GM12878 (cell line): ENCODE measurements at regions of chr2 and their contacts with region 1.

Region 1: DNA sequence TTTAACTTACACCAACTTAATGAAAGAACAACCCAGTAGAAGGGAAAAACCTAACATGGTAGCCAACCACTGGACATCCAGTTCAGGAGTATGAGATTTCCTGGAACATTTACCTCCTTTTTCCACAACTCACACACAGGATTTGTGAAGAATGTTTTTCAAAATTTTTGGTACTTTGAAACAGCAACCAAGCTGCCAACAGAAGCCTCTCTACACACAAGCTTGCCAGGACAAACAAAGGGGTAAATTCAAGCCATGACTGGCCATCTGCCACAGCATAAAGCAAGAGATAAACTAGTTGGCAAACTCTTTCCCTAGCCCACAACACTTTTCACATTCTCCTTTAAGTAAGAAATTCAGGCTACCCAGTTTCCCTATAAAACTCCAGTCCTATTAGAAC is 21.4 kb downstream of the MGAT4A start:
- DNase-seq: no peak
- ATAC-seq: no peak
- H3K4me3 ChIP-seq: no peak overlapping the region
- H3K27ac ChIP-seq: no peak overlapping the region
- H3K4me1 ChIP-seq: peaks cover 18% of the 10 kb centered on the region
- H3K27me3 ChIP-seq: no peaks in the 10 kb centered on the region
- CTCF ChIP-seq: no peak
- EP300 ChIP-seq: no peak
- POLR2A ChIP-seq: no peak
- RAD21 ChIP-seq: no peak

Region 2: DNA sequence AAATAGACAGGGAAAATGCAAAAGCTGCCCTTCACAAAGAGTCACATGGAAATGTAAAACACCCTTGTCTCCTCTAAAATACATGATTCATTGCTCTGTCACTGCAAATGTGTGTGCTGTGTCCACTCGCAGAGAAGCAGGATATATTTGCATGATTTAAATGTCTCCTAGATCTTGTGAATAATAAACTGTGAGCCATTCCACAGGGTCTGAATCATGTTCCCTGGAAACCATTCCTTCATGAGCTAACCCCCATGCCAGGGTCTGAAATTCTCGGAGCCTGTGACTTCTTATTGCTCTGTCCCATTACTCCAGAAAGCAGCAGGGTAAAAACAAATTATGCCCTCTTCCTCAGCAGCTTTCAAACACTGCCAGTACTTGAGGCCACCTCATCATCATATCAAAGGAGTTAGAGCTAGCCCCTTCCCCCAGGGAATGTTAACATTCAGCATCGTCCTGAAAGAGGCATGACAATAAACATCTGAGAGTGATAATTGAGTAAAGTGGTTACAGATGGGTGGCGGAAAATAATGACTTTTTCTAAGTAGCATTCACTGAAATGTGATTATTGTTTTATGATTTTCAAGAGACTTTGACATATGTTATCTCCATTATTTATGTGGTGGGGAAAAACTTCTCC is 375.0 kb before region 1 on chr2:
- CTCF ChIA-PET with region 1: no interaction called
- POLR2A ChIA-PET with region 1: no interaction called
- RAD21 ChIA-PET with region 1: no interaction called
- SMC1A ChIA-PET with region 1: no interaction called
- in situ Hi-C with region 1: no loop called
- intact Hi-C with region 1: no loop called
- DNase-seq: no peak
- ATAC-seq: no peak
- H3K4me3 ChIP-seq: no peak overlapping the region
- H3K27ac ChIP-seq: no peak overlapping the region
- H3K4me1 ChIP-seq: no peaks in the 10 kb centered on the region
- H3K27me3 ChIP-seq: peaks cover 2 to 3% of the 10 kb centered on the region in 2 experiments; a peak in 3 of 4 replicates
- CTCF ChIP-seq: no peak
- EP300 ChIP-seq: no peak
- POLR2A ChIP-seq: no peak
- RAD21 ChIP-seq: no peak

Region 3: DNA sequence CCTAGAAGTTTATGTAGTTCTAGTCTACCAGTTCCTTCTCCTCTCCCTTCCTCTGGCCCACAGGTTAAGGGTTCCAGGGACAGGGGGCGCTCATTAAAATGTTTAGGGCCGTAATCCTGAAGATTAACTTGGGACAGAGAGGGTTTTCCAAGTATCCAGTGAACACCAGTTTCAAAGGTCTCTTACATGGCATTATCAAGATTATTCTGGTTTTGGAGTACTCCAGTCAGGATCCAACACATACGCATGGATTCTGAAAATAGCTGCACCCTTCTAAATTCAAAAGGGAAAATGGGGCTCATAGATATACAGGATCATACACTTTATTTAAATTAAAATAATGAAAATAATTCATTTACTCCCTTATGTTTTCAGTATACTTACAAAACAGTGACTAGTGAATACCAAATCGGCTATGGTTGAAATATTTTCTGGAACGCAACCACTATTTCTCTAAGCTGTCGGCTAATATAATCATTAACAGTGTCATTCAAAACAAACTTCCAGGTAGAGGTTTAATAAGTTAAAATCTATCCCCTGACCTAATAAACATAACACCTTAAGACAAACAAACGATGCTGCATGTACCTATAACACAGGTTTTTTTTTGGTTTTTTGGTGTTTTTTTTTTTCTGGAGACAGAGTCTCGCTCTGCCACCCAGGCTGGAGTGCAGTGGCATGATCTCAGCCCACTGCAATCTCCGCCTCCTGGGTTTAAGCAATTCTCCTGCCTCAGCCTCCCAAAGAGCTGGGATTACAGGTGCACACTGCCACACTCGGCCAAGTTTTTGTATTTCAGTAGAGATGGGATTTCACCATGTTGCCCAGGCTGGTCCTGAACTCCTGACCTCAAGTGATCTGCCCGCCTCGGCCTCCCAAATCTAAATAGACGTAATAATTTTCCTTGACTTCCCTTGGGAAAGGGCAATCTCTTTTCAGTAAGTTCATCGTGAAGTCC is 23.3 kb before region 1 on chr2:
- CTCF ChIA-PET with region 1: no interaction called
- POLR2A ChIA-PET with region 1: interaction called, 10 read pairs
- RAD21 ChIA-PET with region 1: no interaction called
- SMC1A ChIA-PET with region 1: interaction called, 3 read pairs
- in situ Hi-C with region 1: no loop called
- intact Hi-C with region 1: no loop called
- DNase-seq: no peak
- ATAC-seq: no peak
- H3K4me3 ChIP-seq: no peak overlapping the region
- H3K27ac ChIP-seq: no peak overlapping the region
- H3K4me1 ChIP-seq: no peaks in the 10 kb centered on the region
- H3K27me3 ChIP-seq: no peaks in the 10 kb centered on the region
- CTCF ChIP-seq: no peak
- EP300 ChIP-seq: no peak
- POLR2A ChIP-seq: no peak
- RAD21 ChIP-seq: no peak

Region 4: DNA sequence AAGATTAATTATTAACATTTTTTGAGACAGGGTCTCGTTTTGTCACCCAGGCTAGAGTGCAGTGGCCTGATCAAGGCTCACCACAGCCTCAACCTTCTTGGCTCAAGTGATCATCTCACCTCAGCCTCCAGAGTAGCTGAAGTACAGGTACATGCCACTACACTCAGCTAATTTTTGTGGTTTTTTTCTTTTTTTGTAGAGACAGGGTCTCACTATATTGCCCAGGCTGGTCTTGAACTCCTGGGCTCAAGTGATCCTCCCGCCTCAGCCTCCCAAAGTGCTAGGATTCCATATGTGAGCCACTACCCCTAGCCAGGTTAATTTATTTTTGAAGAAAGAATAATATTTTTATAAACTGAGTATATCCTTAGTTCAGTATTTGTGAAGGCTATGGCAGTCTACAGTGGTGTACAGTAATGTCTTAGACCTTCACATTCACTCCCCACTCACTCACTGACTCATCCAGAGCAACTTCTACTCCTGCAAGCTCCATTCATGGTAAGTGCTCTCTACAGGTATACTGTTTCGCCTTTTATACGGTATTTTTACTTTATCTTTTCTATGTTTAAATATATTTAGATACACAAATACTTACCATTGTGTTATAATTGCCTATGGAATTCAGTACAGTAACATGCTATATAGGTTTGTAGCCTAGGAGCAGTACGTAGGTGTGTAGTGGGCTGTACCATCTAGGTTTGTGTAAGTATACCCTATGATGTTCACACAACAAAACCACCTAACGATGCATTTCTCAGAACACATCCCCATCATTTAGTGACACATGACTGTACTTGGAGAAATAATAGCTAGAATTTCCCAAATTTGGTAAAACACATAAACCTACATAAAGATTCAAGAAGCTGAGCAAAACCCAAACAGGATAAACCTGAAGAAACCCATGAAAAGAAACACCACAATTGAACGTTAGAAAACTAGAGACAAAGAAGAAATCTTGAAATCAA is 17.2 kb before region 1 on chr2:
- CTCF ChIA-PET with region 1: interaction called, 5 read pairs
- POLR2A ChIA-PET with region 1: no interaction called
- RAD21 ChIA-PET with region 1: interaction called, 3 read pairs
- SMC1A ChIA-PET with region 1: interaction called, 12 read pairs
- in situ Hi-C with region 1: no loop called
- intact Hi-C with region 1: no loop called
- DNase-seq: no peak
- ATAC-seq: peak; percentile 26; the same call in 2 of the 3 replicates
- H3K4me3 ChIP-seq: no peak overlapping the region
- H3K27ac ChIP-seq: no peak overlapping the region
- H3K4me1 ChIP-seq: no peaks in the 10 kb centered on the region
- H3K27me3 ChIP-seq: no peaks in the 10 kb centered on the region
- CTCF ChIP-seq: no peak
- EP300 ChIP-seq: no peak
- POLR2A ChIP-seq: no peak
- RAD21 ChIP-seq: no peak